ENCODE measurements at regions of chr4 and their contacts with region 1.

Region 1: DNA sequence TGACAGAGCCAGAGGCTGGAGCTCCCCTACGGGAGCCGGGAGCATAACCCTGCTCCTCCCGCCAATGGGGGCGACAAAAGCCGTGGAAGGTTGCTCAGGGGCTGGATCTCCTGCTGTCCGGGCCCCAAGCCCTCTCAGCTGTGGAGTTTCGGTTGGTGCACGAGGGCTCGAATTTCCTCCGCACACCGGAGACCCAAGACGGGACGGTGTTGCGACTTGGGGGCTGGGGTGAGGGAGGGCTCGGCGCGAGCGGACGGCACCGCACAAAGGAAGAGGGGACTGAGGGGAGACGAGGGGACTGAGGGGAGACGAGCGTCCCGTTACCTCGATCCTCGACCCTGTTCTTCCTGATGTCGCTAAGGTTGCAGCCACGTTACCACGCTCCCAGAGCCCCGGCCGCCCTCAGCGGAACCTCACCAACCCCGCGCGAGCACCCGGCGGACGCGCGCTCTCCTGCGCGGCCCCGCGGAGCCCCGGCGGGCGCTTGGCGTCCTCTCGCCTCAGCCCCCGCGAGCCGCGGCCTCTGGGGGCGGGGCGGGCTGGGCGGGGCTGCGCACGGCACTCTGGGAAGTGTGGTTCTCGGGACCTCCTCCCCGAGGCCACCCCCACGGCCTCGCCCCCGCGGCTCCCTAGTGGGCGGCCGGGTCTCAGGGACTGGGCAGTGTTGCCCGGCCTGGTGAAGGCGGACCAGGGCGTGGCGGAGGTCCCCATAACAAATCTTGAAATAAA is at the start of gene KLHL8:
- DNase-seq: peak; percentile 96
- CTCF ChIP-seq: no peak

Region 2: DNA sequence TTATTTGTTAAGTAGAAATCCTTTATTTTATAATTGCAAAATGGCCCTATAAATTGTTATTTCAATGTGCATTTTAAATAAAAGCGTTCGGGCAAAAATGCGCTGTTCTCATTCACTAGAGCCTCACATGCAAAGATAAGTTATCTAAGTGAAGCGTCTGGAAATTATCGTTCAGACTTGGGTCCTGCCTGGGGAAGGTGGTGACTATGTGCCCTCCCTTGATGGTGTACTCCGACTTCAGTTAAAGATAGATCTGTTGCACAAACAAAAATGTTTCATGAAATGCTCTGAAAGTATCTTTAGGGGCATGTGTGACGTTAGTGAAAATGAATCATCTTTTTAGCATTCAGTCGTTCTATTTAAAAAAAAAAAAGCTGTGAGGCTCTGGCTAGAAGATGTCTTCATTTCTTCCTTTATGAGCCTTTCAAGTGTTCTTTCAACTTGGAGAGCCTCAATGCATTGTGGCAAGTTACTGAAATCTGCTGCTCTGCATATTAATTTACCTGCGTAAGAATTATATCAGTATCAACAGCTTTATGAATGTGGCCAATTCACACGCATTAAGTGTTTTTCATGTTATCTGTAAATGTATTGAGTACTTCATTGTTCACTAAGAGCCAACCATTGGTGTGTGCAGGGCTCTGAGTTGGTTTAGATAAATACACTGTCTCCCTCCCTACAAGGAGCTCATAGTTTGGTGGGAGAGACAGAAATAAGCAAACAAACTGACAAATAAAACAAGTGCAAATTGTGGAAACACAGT is 202.5 kb before region 1 on chr4:
- CTCF ChIA-PET with region 1: no interaction called
- POLR2A ChIA-PET with region 1: no interaction called
- DNase-seq: no peak
- CTCF ChIP-seq: no peak

Region 3: GRCh38 chr4:87209696-87210095 is 10.6 kb before region 1 on chr4:
- CTCF ChIA-PET with region 1: interaction called, 19 read pairs
- POLR2A ChIA-PET with region 1: interaction called, 4 read pairs
- DNase-seq: peak; percentile 54
- CTCF ChIP-seq: no peak

Measured in GM10248 (cell line).